HEK293T (cell line): ENCODE measurements at regions of chr10 and their contacts with region 1.

Region 1: GRCh38 chr10:29998142-29998808 is 61.1 kb downstream of the JCAD start:
- DNase-seq: peak; percentile 60

Region 2: DNA sequence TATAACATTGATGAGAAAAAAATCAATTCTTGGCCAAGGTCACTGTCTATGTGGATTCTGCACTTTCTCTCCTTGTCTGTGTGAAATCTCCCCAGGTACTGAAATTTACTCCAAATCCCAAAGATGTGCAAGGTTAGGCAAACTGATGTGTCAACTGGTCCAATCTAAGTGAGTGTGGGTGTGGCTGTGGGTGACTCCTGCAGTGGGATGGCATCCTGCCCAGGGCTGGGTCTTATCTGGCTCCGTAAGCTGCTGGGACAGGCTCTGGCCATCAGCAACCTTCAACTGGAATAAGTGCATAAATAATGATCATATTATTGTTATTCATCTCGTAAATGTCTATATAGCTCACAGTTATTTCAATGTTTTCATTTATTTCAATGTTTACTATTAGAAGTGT is 18.2 kb before region 1 on chr10:
- CTCF ChIA-PET with region 1: no interaction called
- POLR2A ChIA-PET with region 1: no interaction called
- DNase-seq: no peak

Region 3: DNA sequence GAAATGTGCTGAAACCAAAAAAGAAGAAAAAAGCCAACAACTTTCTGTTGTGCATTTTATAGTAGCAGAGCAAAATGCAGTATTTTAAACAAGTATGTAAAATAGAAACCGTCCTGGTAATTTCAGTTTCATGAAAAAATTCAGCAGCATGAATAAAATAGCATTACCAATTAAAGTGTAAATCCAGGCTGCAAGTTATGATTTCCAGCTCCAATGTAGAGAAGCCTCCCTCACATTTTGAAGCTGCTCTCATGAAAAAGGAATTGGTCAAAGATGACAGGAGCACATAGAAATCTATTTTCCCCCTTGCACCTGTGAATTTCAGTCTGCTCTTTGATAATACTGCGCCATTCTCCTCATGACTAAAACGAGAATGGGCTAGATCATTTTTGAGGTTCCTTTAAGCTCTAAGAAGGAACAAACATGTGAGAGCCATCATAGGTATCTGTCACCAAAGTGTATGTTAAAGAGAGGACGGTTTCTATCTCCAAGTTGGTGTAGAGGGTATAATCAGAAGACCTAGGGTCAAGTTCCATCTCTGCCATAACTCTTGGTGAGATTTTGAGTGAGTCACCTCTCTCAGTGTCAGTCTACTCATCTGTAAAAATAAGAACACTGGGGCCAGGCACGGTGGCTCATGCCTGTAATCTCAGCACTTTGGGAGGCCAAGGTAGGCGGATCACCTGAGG is 243.3 kb after region 1 on chr10:
- CTCF ChIA-PET with region 1: interaction called, 10 read pairs
- POLR2A ChIA-PET with region 1: no interaction called
- DNase-seq: no peak